Activated CD4-positive, alpha-beta T cell treated with anti-CD3 and anti-CD28 coated beads, Interleukin-2, amount 10 ng/mL, durations not matched to agents 24 days and 14 days (primary cell): ENCODE measurements at regions of chr15 and their contacts with region 1.

Region 1: GRCh38 chr15:90449206-90449735 is 61.2 kb downstream of the IQGAP1 start:
- DNase-seq: no peak
- H3K4me3 Mint-ChIP-seq: no peak overlapping the region
- H3K27ac Mint-ChIP-seq: no peak overlapping the region
- H3K4me1 Mint-ChIP-seq: no peaks in the 10 kb centered on the region
- H3K27me3 Mint-ChIP-seq: no peaks in the 10 kb centered on the region

Region 2: GRCh38 chr15:90320061-90320884 is 129.0 kb before region 1 on chr15:
- intact Hi-C with region 1: no loop called
- DNase-seq: peak; percentile 91
- H3K4me3 Mint-ChIP-seq: peak overlapping the region; percentile 54
- H3K27ac Mint-ChIP-seq: no peak overlapping the region
- H3K4me1 Mint-ChIP-seq: peaks cover 8% of the 10 kb centered on the region
- H3K27me3 Mint-ChIP-seq: no peaks in the 10 kb centered on the region

Region 3: GRCh38 chr15:90482124-90483011 is 33.1 kb after region 1 on chr15:
- intact Hi-C with region 1: loop called (anchors 5 kb)
- DNase-seq: peak; percentile 84
- H3K4me3 Mint-ChIP-seq: no peak overlapping the region
- H3K27ac Mint-ChIP-seq: peak overlapping the region; percentile 13
- H3K4me1 Mint-ChIP-seq: peaks cover 33% of the 10 kb centered on the region
- H3K27me3 Mint-ChIP-seq: no peaks in the 10 kb centered on the region

Region 4: DNA sequence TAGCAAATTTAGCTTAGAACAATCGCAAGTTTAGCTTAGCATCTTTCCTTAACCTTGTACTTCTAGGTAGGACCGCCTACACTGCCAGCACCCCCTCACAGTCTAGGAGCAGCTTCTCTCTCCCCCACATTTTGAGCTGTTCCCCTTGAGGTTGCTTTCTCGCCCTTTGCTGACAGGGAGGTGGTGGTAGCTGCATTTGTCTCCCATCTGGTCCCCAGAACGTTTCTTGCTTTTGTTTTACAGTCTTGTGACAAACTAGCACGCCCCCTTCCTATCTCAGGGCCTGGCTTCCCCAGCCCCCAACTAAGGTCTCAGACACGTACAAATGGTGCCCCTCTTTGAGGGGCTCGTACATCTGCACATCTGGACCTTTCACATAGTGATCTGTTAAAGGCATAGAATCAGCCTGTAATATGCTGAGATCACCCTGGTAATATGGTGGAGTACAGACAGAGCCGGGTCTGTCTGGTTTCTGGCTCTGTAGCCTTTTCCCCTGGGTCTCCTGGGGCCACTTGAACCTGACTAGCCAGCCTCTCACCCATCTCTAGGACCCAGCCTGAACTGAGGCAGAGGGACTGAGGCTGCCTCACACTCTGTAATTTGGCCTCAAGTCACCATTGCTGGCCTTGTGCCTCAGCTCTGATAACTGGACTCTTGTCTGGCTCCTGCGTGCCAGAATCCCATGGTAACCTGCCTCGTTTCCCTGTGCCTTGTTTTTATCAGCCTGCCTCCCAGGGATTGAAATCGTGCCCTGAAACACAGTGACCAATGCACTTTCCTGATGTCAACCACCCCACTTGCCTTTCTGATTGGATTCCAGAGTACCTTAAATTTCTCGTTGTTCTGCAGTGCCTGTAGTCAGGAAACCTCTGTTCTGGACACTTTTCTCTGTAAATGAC is 108.2 kb after region 1 on chr15:
- intact Hi-C with region 1: no loop called
- DNase-seq: no peak
- H3K4me3 Mint-ChIP-seq: peak overlapping the region; percentile 13
- H3K27ac Mint-ChIP-seq: peak overlapping the region; percentile 34
- H3K4me1 Mint-ChIP-seq: peaks cover 66% of the 10 kb centered on the region
- H3K27me3 Mint-ChIP-seq: no peaks in the 10 kb centered on the region